ENCODE measurements at regions of chr11 and their contacts with region 1.

Region 1: GRCh38 chr11:110376711-110377324 is 52.9 kb upstream of the FDX1 start:
- DNase-seq: peak in 4 of 10 donors; percentile 17 to 61 (median 26)

Region 2: GRCh38 chr11:109946322-109946846 is 430.4 kb before region 1 on chr11:
- intact Hi-C with region 1: loop called (anchors 1 kb)
- DNase-seq: peak; percentile 59 to 97 (median 85)

Region 3: GRCh38 chr11:110173811-110174644 is 202.8 kb before region 1 on chr11:
- intact Hi-C with region 1: no loop called
- DNase-seq: peak in 7 of 10 donors; percentile 32 to 88 (median 73)

Region 4: GRCh38 chr11:110296226-110297075 is 80.4 kb before region 1 on chr11 and contains the start of gene RDX:
- intact Hi-C with region 1: loop called (anchors 5 kb)
- DNase-seq: peak; percentile 47 to 95 (median 66)

Region 5: GRCh38 chr11:110327508-110327907 is 49.3 kb before region 1 on chr11:
- intact Hi-C with region 1: no loop called
- DNase-seq: no peak

Measured in posterior cingulate gyrus (tissue), 11 donors.